WTC11 (cell line): ENCODE measurements at regions of chr7 and their contacts with region 1.

Region 1: GRCh38 chr7:22559829-22560489 is 60.0 kb upstream of the STEAP1B start:
- DNase-seq: peak; percentile 76
- ATAC-seq: peak; percentile 74
- H3K4me3 Mint-ChIP-seq: no peak overlapping the region
- H3K27ac Mint-ChIP-seq: peak overlapping the region; percentile 55; the same call in 1 of the 2 replicates
- H3K4me1 Mint-ChIP-seq: peaks cover 65% of the 10 kb centered on the region
- H3K27me3 Mint-ChIP-seq: no peaks in the 10 kb centered on the region
- CTCF ChIP-seq: peak; percentile 65

Region 2: DNA sequence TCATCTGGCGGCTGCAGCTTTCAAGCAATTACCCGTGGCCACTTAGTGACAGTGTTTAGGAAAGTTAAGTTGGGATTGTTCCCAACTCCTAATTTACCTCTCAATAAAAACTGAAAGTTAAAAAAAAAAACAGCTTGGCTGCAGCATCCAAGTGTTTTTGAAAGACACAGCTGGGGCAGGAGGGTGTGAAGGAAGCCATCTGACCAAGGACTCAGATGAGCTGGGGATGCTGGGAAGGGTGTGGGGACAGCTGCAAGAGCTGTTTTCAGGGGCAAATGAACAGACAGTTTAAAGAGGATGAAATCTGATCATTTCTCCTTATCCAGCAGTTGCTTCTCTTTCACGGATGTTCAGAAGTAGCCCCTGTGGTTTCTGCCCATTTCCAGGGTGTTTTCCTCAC is 485.1 kb before region 1 on chr7:
- CTCF ChIA-PET with region 1: no interaction called
- POLR2A ChIA-PET with region 1: no interaction called
- DNase-seq: no peak
- ATAC-seq: no peak
- H3K4me3 Mint-ChIP-seq: no peak overlapping the region
- H3K27ac Mint-ChIP-seq: no peak overlapping the region
- H3K4me1 Mint-ChIP-seq: no peaks in the 10 kb centered on the region
- H3K27me3 Mint-ChIP-seq: no peaks in the 10 kb centered on the region
- CTCF ChIP-seq: no peak

Region 3: DNA sequence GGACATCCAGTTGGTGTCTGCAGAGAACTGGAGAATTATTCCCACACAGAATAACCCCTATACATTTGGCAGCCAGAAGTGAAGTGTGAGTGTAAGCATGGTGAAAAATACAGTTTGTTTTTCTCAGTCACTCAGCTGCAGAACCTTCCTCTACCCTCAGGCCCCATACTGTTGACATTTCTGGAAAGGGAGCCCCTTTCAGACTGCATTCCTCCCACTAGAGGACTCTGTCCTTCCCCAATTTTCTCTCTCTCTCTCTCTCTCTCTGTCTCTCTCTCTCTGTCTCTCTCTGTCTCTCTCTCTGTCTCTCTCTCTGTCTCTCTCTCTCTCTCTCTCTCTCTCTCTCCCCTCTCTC is 26.8 kb after region 1 on chr7:
- CTCF ChIA-PET with region 1: interaction called, 55 read pairs
- POLR2A ChIA-PET with region 1: interaction called, 4 read pairs
- DNase-seq: no peak
- ATAC-seq: peak; percentile 72
- H3K4me3 Mint-ChIP-seq: no peak overlapping the region
- H3K27ac Mint-ChIP-seq: peak overlapping the region; percentile 33; the same call in 1 of the 2 replicates
- H3K4me1 Mint-ChIP-seq: peaks cover 58% of the 10 kb centered on the region
- H3K27me3 Mint-ChIP-seq: no peaks in the 10 kb centered on the region
- CTCF ChIP-seq: no peak

Region 4: GRCh38 chr7:22732556-22733126 is 172.7 kb after region 1 on chr7:
- CTCF ChIA-PET with region 1: interaction called, 197 read pairs
- POLR2A ChIA-PET with region 1: interaction called, 4 read pairs
- DNase-seq: no peak
- ATAC-seq: peak; percentile 70
- H3K4me3 Mint-ChIP-seq: no peak overlapping the region
- H3K27ac Mint-ChIP-seq: no peak overlapping the region
- H3K4me1 Mint-ChIP-seq: peaks cover 6% of the 10 kb centered on the region; the same call in 1 of the 2 replicates
- H3K27me3 Mint-ChIP-seq: no peaks in the 10 kb centered on the region; the same call in 1 of the 2 replicates
- CTCF ChIP-seq: no peak

Region 5: DNA sequence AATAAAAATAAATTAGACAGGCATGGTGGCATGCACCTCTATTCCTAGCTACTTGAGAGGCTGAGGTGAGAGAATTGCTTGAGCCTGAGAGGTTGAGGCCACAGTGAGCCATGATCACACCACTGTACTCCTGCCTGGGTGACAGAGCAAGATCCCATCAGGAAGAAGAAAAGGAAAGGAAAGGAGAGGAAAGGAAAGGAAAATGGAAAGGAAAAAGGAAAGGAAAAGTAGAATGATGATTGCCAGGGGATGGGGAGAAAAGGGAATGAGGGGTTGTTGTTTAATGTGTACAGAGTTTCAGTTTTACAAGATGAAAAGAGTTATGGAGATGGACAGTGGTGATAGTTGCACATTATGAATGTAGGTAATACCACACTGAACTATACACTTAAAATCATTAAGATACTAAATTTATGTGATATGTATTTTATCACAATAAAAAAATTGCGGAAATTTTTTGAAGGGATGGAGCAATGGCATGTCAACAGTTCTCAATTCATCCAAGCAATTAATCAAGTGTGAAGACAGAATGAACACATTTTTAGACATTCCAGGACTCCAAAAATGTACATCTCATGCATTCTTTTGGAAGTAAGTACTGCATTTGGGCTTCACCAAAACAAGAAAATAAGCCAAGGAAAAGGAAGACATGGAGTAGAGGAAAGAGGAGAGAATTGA is 211.4 kb after region 1 on chr7:
- CTCF ChIA-PET with region 1: no interaction called
- POLR2A ChIA-PET with region 1: no interaction called
- DNase-seq: no peak
- ATAC-seq: no peak
- H3K4me3 Mint-ChIP-seq: no peak overlapping the region
- H3K27ac Mint-ChIP-seq: no peak overlapping the region
- H3K4me1 Mint-ChIP-seq: no peaks in the 10 kb centered on the region
- H3K27me3 Mint-ChIP-seq: no peaks in the 10 kb centered on the region
- CTCF ChIP-seq: no peak

Region 6: GRCh38 chr7:22811746-22812280 is 251.9 kb after region 1 on chr7:
- CTCF ChIA-PET with region 1: interaction called, 19 read pairs
- POLR2A ChIA-PET with region 1: no interaction called
- DNase-seq: no peak
- ATAC-seq: no peak
- H3K4me3 Mint-ChIP-seq: no peak overlapping the region
- H3K27ac Mint-ChIP-seq: peak overlapping the region; percentile 98
- H3K4me1 Mint-ChIP-seq: peaks cover 78% of the 10 kb centered on the region
- H3K27me3 Mint-ChIP-seq: no peaks in the 10 kb centered on the region
- CTCF ChIP-seq: no peak

Region 7: DNA sequence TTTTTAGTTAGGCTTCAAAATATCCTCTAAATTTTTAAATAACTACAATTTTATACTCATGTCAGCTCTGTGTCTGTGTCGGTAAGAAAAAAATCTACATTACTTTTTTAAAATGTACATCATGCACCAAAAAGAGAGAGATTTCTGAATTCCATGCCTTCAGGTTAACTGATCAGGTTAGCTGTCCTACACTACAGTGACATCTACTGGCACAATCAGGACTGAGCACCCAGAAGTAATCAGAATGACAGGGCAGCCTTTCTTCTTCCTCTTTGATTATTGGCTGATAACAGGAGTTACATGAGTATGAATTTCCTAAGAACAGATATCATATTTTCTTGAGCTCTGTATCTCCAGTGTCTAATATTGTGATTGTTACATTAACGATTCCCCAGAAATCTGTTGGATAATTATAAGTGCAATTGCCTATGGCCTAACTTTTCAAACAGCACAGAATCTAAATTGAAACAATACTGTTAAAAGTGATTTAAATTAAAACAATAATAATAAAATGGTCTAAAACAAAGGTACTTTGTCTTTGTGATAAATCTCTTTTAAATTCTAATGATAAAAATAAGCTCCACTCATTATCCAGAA is 495.7 kb after region 1 on chr7:
- CTCF ChIA-PET with region 1: interaction called, 34 read pairs
- POLR2A ChIA-PET with region 1: no interaction called
- DNase-seq: peak; percentile 50
- ATAC-seq: peak; percentile 82
- H3K4me3 Mint-ChIP-seq: no peak overlapping the region
- H3K27ac Mint-ChIP-seq: no peak overlapping the region
- H3K4me1 Mint-ChIP-seq: peaks cover 24% of the 10 kb centered on the region
- H3K27me3 Mint-ChIP-seq: no peaks in the 10 kb centered on the region
- CTCF ChIP-seq: peak; percentile 64